ENCODE measurements at regions of chr11 and their contacts with region 1.

Region 1: GRCh38 chr11:114059278-114059983 is at the start of gene ZBTB16:
- DNase-seq: peak; percentile 97
- ATAC-seq: peak; percentile 77
- total RNA-seq, gene ZBTB16: 78.1 TPM

Region 2: GRCh38 chr11:113934761-113935160 is 124.7 kb before region 1 on chr11:
- intact Hi-C with region 1: no loop called
- DNase-seq: no peak
- ATAC-seq: no peak

Region 3: DNA sequence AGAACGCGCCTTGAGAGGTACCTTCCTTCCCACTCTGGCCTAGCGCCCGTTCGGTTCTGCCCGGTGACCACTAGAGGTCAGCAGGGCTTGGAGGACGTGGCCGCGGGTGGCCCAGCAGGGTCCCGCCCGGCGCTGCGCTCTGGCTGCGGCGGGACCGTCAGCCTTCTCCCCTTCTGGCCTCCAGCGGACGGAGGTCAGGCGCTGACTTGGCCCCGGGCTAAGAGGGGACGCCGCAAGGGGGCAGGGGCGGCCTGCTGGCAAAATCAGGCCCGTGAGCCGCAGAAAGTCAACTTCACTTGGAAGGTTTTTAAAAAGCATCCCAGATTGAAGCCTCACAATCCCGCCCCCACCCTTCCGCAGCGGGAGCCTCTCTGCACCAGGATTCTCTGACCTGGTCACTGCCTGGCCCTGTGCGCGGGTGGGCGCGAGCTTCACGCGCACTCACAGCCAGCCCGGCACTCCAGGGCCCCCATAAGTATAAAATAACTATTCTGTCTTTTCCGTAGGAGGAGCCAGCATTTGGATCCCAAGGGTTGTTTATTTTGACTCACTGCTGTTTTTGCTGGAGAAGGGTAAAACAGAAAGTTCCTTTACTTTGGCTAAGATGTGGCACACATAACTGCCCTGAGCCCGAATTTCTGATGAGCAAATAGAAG is 23.1 kb before region 1 on chr11:
- intact Hi-C with region 1: loop called (anchors 2 kb)
- DNase-seq: peak; percentile 94
- ATAC-seq: peak; percentile 96

Region 4: GRCh38 chr11:114128399-114128798 is 69.0 kb after region 1 on chr11:
- intact Hi-C with region 1: loop called (anchors 5 kb)
- DNase-seq: no peak
- ATAC-seq: no peak

Region 5: DNA sequence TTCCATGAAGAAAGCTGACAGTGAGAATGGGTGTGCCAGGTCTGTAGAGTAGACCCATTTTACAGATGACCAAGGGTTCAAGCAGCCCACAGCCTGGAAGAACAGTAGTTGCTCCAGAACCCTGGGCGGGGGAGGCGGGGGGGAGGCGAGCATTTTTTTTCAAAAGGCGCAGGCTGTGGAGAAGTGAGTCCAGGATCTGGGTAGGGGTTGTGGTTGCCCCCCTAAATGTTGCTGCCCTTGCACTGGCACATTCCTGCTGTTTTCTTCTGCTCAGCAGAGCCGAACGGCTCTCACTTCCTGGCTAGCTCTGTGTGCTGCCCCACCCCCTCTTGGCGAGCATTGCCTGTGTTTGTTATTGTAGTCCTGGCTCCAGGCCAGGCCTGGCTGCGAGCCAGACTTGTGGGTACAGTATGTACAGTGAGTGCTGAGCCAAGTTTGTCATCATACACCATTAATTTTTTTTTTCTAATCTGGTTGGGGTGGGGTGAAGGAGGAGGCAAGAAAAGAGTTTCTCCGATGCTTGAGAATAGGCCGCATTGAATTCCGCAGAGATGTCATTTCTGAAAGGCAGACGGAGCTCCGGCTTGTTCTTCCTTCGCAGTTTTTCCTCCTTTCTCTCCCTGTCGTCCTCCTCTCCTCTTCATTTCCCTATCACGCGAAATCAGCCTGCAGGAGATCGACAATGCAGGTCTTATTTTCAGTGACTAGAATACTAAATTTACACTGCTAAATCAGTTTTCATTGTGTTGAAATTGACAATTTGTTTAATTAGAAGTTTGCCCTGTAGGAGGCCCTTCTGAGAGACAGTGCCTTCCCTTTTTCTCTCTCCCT is 100.6 kb after region 1 on chr11:
- intact Hi-C with region 1: loop called (anchors 1 kb)
- DNase-seq: peak; percentile 100
- ATAC-seq: peak; percentile 55

Region 6: GRCh38 chr11:114180301-114181055 is 121.0 kb after region 1 on chr11:
- intact Hi-C with region 1: loop called (anchors 1 kb)
- DNase-seq: no peak
- ATAC-seq: peak; percentile 35

Region 7: GRCh38 chr11:114197799-114198500 is 138.5 kb after region 1 on chr11:
- intact Hi-C with region 1: loop called (anchors 5 kb)
- DNase-seq: peak; percentile 76
- ATAC-seq: peak; percentile 77

Region 8: DNA sequence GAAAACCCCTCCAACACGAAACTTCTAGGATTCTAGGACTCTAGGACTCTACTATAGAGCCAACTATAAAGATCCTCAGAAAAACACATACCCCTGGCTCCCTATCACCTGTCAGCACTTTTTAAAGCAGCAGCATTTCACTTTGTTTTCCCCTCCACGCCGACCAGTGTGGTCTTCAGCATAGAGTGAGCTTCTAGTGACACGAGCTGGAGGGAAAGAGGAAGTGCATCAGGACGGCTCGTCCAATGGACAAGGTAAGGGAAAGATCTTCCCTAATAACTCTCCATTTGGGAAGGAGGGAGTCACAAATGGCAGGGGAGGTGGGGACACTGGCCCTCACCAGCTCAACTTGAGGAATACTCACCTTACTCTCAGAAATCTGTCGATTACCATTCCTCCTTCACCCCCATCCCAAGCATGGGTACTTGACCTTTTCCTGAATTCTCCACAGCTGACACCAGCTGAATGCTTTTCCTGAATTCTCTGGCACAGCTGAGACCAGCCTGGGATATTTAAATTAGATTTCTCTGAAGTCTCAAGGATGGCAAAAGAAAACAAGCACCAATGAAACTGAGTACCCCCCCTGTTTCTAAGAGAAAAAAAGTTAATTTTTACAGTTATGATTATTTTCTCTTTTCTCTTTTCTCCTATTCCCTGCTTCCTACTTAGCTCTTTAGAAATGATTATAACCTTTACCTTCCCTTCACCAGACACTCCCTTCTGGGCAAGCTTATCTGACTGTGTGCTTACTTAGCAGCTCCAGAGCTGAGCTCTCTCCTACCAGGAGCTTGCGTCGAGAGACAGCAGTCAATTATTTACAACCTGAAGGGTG is 203.5 kb after region 1 on chr11:
- intact Hi-C with region 1: loop called (anchors 2 kb)
- DNase-seq: no peak
- ATAC-seq: peak; percentile 30